Caco-2 (cell line): ENCODE measurements at regions of chr3 and their contacts with region 1.

Region 1: DNA sequence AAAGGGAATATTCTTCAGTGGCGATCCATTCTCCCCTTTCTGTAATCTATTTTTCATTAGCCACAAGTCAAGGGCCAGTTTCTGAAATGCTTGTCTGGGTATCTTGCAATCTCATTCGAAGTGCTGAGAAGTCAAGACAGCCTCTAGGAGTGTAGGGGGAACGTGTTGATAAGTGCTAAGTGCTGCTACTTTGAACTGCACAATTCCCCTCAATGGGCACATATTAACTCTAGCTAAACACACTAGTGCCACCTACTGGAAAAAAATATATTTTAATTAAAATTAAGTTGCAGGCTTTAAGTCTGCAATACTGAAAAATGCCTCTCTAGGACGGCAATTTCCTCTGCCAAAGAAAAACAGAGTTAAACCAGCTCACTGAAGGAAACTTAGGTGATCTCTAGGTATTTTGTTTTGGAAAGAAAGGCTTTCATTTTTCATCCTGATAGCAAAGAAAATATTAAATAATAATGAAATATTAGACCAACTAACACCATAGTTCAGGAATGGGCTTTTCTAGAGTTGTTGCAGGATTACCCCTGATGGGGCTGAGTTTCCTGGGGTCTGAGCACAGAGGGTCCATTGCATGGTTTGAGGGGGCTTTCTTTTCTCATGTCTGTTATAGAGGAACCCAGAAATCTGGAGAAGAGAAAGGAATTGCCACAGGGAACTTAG is 181.9 kb upstream of the KBTBD8 start:
- DNase-seq: peak in 1 of 2 experiments; percentile 21
- H3K4me3 ChIP-seq: no peak overlapping the region
- H3K4me3 Mint-ChIP-seq: no peak overlapping the region
- H3K27ac Mint-ChIP-seq: no peak overlapping the region
- H3K4me1 ChIP-seq: no peaks in the 10 kb centered on the region
- H3K4me1 Mint-ChIP-seq: peaks cover 6% of the 10 kb centered on the region
- H3K27me3 ChIP-seq: no peaks in the 10 kb centered on the region
- H3K27me3 Mint-ChIP-seq: no peaks in the 10 kb centered on the region
- CTCF ChIP-seq: peak; percentile 32 to 56

Region 2: DNA sequence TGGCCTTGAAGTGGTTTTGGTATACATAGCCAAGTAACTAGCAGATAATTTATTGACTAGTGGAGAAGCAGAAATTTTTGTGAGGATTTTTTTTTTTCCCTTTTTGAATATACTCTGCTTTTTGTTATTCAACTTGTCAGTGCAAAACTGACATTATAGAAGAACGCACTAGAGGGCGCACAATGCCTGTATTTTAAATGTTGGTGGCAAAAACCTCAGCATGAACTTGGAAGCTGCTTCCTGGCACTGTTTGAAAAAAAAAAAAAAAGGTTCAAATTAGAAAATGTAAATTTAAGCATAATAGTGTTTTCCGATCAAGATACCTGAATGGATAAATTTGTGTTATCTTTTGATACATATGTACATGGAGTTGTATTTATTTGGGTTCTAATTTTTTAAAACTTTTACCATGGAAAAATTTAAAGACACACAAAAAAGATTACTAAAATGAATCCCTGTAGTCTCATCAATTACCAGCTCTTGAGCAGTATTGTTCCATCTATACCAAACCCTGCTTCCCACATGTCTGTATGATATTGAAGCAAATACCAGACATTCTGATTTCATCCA is 539.4 kb before region 1 on chr3:
- CTCF ChIA-PET with region 1: interaction called, 5 read pairs
- POLR2A ChIA-PET with region 1: no interaction called
- intact Hi-C with region 1: loop called (anchors 1 kb)
- DNase-seq: peak; percentile 54 to 66
- H3K4me3 ChIP-seq: no peak overlapping the region
- H3K4me3 Mint-ChIP-seq: no peak overlapping the region
- H3K27ac Mint-ChIP-seq: no peak overlapping the region
- H3K4me1 ChIP-seq: no peaks in the 10 kb centered on the region
- H3K4me1 Mint-ChIP-seq: no peaks in the 10 kb centered on the region
- H3K27me3 ChIP-seq: no peaks in the 10 kb centered on the region
- H3K27me3 Mint-ChIP-seq: no peaks in the 10 kb centered on the region
- CTCF ChIP-seq: peak; percentile 50 to 67

Region 3: GRCh38 chr3:66407611-66408218 is 408.5 kb before region 1 on chr3:
- CTCF ChIA-PET with region 1: interaction called, 8 read pairs
- POLR2A ChIA-PET with region 1: no interaction called
- intact Hi-C with region 1: loop called (anchors 1 kb)
- DNase-seq: peak; percentile 72 to 84
- H3K4me3 ChIP-seq: no peak overlapping the region
- H3K4me3 Mint-ChIP-seq: no peak overlapping the region
- H3K27ac Mint-ChIP-seq: peak overlapping the region; percentile 53
- H3K4me1 ChIP-seq: peaks cover 4% of the 10 kb centered on the region; the same call in 1 of the 2 replicates
- H3K4me1 Mint-ChIP-seq: peaks cover 14% of the 10 kb centered on the region
- H3K27me3 ChIP-seq: no peaks in the 10 kb centered on the region
- H3K27me3 Mint-ChIP-seq: no peaks in the 10 kb centered on the region
- CTCF ChIP-seq: peak; percentile 76 to 91

Region 4: DNA sequence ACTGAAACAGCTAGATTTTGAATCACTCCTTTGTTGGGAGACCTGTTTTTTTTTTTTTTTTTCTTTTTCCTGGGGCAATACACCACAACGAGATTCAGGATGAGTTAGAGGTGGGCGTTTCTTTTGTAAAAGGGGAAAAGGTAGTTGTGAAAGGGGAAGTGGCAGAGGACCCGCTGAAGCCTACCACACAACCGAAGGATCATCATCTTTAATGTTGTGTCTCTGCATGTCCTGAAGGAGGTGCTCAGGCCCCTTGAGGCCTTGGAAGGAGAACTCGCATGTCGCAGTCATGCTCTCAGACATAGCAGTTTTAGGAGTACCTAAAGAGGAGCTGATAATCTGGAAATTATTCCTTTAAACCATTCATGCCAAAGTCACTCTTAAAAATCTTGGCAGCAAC is 177.5 kb before region 1 on chr3:
- CTCF ChIA-PET with region 1: no interaction called
- POLR2A ChIA-PET with region 1: no interaction called
- intact Hi-C with region 1: loop called (anchors 1 kb)
- DNase-seq: no peak
- H3K4me3 ChIP-seq: no peak overlapping the region
- H3K4me3 Mint-ChIP-seq: no peak overlapping the region
- H3K27ac Mint-ChIP-seq: no peak overlapping the region
- H3K4me1 ChIP-seq: peaks cover 10% of the 10 kb centered on the region
- H3K4me1 Mint-ChIP-seq: no peaks in the 10 kb centered on the region
- H3K27me3 ChIP-seq: no peaks in the 10 kb centered on the region
- H3K27me3 Mint-ChIP-seq: no peaks in the 10 kb centered on the region
- CTCF ChIP-seq: no peak

Region 5: DNA sequence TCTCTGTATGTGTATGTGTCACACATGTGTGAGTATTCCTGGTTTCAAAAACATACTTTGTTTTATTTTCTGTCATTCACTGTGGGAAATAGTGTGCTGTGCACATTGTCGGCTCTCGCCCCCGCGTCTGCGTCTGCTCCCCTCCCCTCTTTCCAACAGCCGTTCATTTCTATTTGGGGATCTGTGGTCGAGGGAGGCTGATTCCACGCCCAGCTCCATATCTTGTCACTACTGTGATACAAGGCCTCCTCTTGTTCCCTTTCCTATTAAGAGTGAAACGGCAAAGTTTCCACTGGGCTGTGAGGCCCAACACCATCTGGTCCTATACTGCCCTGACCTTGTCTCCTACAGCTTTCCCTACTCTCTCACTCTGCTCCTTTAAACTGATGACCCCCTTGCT is 142.9 kb before region 1 on chr3:
- CTCF ChIA-PET with region 1: no interaction called
- POLR2A ChIA-PET with region 1: no interaction called
- intact Hi-C with region 1: no loop called
- DNase-seq: no peak
- H3K4me3 ChIP-seq: no peak overlapping the region
- H3K4me3 Mint-ChIP-seq: no peak overlapping the region
- H3K27ac Mint-ChIP-seq: no peak overlapping the region
- H3K4me1 ChIP-seq: peaks cover 10% of the 10 kb centered on the region; the same call in 1 of the 2 replicates
- H3K4me1 Mint-ChIP-seq: peaks cover 7% of the 10 kb centered on the region
- H3K27me3 ChIP-seq: no peaks in the 10 kb centered on the region
- H3K27me3 Mint-ChIP-seq: no peaks in the 10 kb centered on the region
- CTCF ChIP-seq: no peak

Region 6: DNA sequence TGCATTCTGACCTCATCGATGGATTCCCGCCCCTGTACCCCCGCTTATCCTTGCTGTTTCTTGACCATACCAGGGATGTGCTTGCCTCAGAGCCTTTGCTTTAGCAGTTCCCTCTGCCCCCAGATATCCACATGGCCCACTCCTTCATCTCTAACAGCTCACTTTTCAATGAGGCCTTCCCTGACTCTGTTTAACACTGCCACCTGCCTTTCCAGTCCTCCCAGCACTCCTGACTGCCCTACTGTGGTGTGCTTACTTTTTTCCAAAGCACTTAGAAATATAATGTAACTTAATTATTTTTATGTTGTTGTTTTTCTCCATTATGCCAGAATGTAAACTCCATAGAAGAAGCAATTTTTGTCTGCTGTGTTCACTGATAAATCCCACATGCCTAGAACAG is 43.0 kb before region 1 on chr3:
- CTCF ChIA-PET with region 1: no interaction called
- POLR2A ChIA-PET with region 1: no interaction called
- intact Hi-C with region 1: loop called (anchors 2 kb)
- DNase-seq: no peak
- H3K4me3 ChIP-seq: no peak overlapping the region
- H3K4me3 Mint-ChIP-seq: no peak overlapping the region
- H3K27ac Mint-ChIP-seq: no peak overlapping the region
- H3K4me1 ChIP-seq: no peaks in the 10 kb centered on the region
- H3K4me1 Mint-ChIP-seq: no peaks in the 10 kb centered on the region
- H3K27me3 ChIP-seq: no peaks in the 10 kb centered on the region
- H3K27me3 Mint-ChIP-seq: peaks cover 8% of the 10 kb centered on the region
- CTCF ChIP-seq: no peak

Region 7: GRCh38 chr3:67755643-67756042 is 939.4 kb after region 1 on chr3:
- CTCF ChIA-PET with region 1: no interaction called
- POLR2A ChIA-PET with region 1: no interaction called
- intact Hi-C with region 1: no loop called
- DNase-seq: no peak
- H3K4me3 ChIP-seq: no peak overlapping the region
- H3K4me3 Mint-ChIP-seq: no peak overlapping the region
- H3K27ac Mint-ChIP-seq: no peak overlapping the region
- H3K4me1 ChIP-seq: no peaks in the 10 kb centered on the region
- H3K4me1 Mint-ChIP-seq: no peaks in the 10 kb centered on the region
- H3K27me3 ChIP-seq: no peaks in the 10 kb centered on the region
- H3K27me3 Mint-ChIP-seq: peaks cover 2% of the 10 kb centered on the region
- CTCF ChIP-seq: no peak